Activated B cell treated with CpG ODN at 0.5 μM for 24 hours (primary cell): ENCODE measurements at regions of chr11 and their contacts with region 1.

Region 1: GRCh38 chr11:124758317-124759203 is 3.5 kb downstream of the ESAM start:
- DNase-seq: peak; percentile 72
- ATAC-seq: peak; percentile 67
- H3K4me3 Mint-ChIP-seq: peak overlapping the region; percentile 79
- H3K27ac Mint-ChIP-seq: peak overlapping the region; percentile 60
- H3K4me1 Mint-ChIP-seq: peaks cover 46% of the 10 kb centered on the region
- H3K27me3 Mint-ChIP-seq: peaks cover 2% of the 10 kb centered on the region
- CTCF ChIP-seq: no peak

Region 2: GRCh38 chr11:124644426-124645280 is 113.9 kb before region 1 on chr11:
- CTCF ChIA-PET with region 1: interaction called, 5 read pairs
- POLR2A ChIA-PET with region 1: no interaction called
- intact Hi-C with region 1: loop called (anchors 1 kb)
- DNase-seq: no peak
- ATAC-seq: peak; percentile 79
- H3K4me3 Mint-ChIP-seq: no peak overlapping the region
- H3K27ac Mint-ChIP-seq: no peak overlapping the region
- H3K4me1 Mint-ChIP-seq: peaks cover 18% of the 10 kb centered on the region
- H3K27me3 Mint-ChIP-seq: no peaks in the 10 kb centered on the region
- CTCF ChIP-seq: peak; percentile 87

Region 3: DNA sequence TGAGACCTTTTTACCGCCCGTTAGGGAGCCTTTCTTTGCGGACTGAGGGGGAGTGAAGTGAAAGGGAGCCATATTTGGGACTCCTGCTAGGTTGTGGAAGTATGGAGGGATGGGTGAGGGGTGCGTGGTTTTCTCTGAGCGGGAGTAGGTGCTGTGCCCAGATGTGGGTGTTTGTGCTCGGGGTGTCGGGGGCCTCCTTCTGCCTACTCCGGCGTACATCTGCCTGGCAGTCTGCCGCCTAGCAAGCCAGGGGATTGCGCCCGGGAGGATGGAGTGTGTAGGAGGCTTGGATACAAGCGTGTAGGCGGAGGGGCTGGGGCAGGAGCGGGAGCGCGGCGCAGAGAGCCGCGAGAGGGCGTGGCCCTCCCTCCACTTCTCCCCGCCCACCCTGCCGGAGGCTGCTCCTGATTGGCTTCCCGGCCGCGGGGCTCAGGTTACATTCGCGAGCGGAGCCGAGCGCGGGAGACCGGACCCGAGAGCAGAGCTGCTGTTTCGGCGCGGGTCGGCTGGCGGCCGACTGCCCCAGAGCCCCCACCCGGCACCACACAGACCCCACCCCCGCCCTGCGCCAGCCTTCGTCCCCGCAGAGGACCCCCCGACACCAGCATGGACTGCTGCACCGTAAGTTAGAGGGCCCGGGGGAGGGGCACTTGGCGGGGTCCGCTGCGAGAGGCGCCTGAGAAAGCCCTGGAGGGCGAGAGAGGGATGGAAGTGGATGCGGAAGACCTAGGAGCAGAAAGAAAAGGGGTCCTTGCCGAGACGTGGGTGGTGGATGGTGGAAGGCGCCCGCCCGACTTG is 18.9 kb before region 1 on chr11 and contains the start of gene NRGN:
- CTCF ChIA-PET with region 1: interaction called, 40 read pairs
- POLR2A ChIA-PET with region 1: interaction called, 5 read pairs
- intact Hi-C with region 1: loop called (anchors 1 kb)
- DNase-seq: peak; percentile 75
- ATAC-seq: peak; percentile 98
- H3K4me3 Mint-ChIP-seq: peak within 1 kb of the TSS; percentile 83
- H3K27ac Mint-ChIP-seq: no peak within 1 kb of the TSS
- H3K4me1 Mint-ChIP-seq: peaks cover 19% of the 10 kb centered on the region
- H3K27me3 Mint-ChIP-seq: no peaks in the 10 kb centered on the region
- CTCF ChIP-seq: no peak
- total RNA-seq, gene NRGN: 0.69 and 1.0 TPM in 2 replicates

Region 4: GRCh38 chr11:124793466-124794278 is 35.1 kb after region 1 on chr11:
- CTCF ChIA-PET with region 1: interaction called, 24 read pairs
- POLR2A ChIA-PET with region 1: no interaction called
- intact Hi-C with region 1: loop called (anchors 1 kb)
- DNase-seq: no peak
- ATAC-seq: peak; percentile 60
- H3K4me3 Mint-ChIP-seq: no peak overlapping the region
- H3K27ac Mint-ChIP-seq: no peak overlapping the region
- H3K4me1 Mint-ChIP-seq: peaks cover 23% of the 10 kb centered on the region
- H3K27me3 Mint-ChIP-seq: no peaks in the 10 kb centered on the region
- CTCF ChIP-seq: peak; percentile 31

Region 5: DNA sequence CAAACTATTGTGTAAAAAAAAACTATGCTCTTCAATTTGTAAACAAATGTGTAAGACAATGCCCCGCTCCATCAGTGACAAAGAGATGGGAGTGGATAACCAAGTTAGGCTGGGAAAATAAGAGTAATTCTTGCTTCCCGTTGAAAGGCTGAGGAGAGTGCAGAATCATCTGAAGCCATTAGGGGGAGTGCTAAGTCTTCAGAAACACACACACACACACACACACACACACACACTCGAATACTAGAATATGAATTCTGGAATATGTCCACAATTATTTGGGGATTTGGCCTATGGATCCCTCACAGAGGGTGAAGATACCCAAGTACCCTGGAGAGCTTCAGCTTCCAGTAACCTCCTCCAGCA is 78.9 kb after region 1 on chr11:
- CTCF ChIA-PET with region 1: interaction called, 8 read pairs
- POLR2A ChIA-PET with region 1: interaction called, 3 read pairs
- intact Hi-C with region 1: loop called (anchors 1 kb)
- DNase-seq: no peak
- ATAC-seq: no peak
- H3K4me3 Mint-ChIP-seq: no peak overlapping the region
- H3K27ac Mint-ChIP-seq: no peak overlapping the region
- H3K4me1 Mint-ChIP-seq: peaks cover 16% of the 10 kb centered on the region
- H3K27me3 Mint-ChIP-seq: peaks cover 47% of the 10 kb centered on the region
- CTCF ChIP-seq: no peak

Region 6: GRCh38 chr11:124891373-124891861 is 132.9 kb after region 1 on chr11:
- CTCF ChIA-PET with region 1: no interaction called
- POLR2A ChIA-PET with region 1: no interaction called
- intact Hi-C with region 1: no loop called
- DNase-seq: no peak
- ATAC-seq: no peak
- H3K4me3 Mint-ChIP-seq: no peak overlapping the region
- H3K27ac Mint-ChIP-seq: no peak overlapping the region
- H3K4me1 Mint-ChIP-seq: no peaks in the 10 kb centered on the region
- H3K27me3 Mint-ChIP-seq: peaks cover 6% of the 10 kb centered on the region
- CTCF ChIP-seq: no peak

Region 7: GRCh38 chr11:126268708-126269579 is 1510.4 kb after region 1 on chr11 and contains the starts of genes FOXRED1 and SRPRA:
- CTCF ChIA-PET with region 1: no interaction called
- POLR2A ChIA-PET with region 1: no interaction called
- intact Hi-C with region 1: loop called (anchors 2 kb)
- DNase-seq: peak; percentile 99
- ATAC-seq: peak; percentile 98
- H3K4me3 Mint-ChIP-seq: peak within 1 kb of the TSS; percentile 95
- H3K27ac Mint-ChIP-seq: peak within 1 kb of the TSS; percentile 95
- H3K4me1 Mint-ChIP-seq: peaks cover 33% of the 10 kb centered on the region
- H3K27me3 Mint-ChIP-seq: no peaks in the 10 kb centered on the region
- CTCF ChIP-seq: no peak
- total RNA-seq, gene FOXRED1: 39.1 and 44.9 TPM in 2 replicates
- total RNA-seq, gene SRPRA: 121 and 128 TPM in 2 replicates